IMR-90 (cell line): ENCODE measurements at regions of chr4 and their contacts with region 1.

Region 1: GRCh38 chr4:73308286-73308685 is 49.7 kb upstream of the ANKRD17 start:
- DNase-seq: peak; percentile 61
- ATAC-seq: peak; percentile 59
- H3K4me3 ChIP-seq: no peak overlapping the region
- H3K27ac ChIP-seq: peak overlapping the region; percentile 84
- H3K4me1 ChIP-seq: peaks cover 4% of the 10 kb centered on the region
- H3K27me3 ChIP-seq: no peaks in the 10 kb centered on the region
- CTCF ChIP-seq: peak; percentile 64
- POLR2A ChIP-seq: no peak
- RAD21 ChIP-seq: peak; percentile 75

Region 2: DNA sequence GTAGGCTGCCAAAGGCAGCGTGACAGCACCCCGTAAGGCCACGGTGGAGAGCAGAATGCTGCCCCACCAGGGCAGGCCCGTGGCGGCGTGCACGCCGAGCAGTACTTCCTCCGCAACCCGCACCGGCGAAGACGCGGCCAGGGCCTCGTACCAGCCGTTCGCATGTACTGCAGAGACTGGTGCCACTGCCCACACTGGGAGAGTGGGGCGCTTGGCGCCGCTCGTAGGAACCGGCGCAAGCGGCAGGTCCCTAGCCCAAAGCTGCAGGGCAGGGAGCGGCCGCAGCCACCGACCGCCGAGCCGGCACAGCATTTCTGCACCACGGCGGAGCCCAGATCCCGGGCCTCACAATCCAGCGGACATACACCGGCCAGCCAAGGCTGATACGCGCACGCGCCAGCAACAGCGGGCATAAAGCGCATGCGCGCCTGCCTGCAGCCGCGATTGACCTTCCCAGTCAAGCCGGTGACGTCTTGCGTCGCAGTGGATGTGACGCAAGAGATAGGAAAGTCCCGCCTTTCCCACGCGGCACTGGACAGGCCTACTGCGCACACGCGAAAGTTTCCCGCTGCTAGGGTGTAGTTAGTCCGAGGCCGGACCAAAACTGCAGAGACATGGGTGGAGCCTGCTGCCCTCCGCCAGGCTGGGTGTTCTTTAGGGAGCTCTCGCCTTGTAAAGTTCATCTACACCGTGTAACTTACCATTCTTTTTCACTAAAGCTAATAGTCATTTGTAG is 238.8 kb before region 1 on chr4 and contains the start of gene COX18:
- CTCF ChIA-PET with region 1: no interaction called
- POLR2A ChIA-PET with region 1: no interaction called
- dilution Hi-C with region 1: no loop called
- in situ Hi-C with region 1: no loop called
- intact Hi-C with region 1: loop called (anchors 5 kb)
- DNase-seq: peak; percentile 99
- ATAC-seq: peak; percentile 91
- H3K4me3 ChIP-seq: peak within 1 kb of the TSS; percentile 66
- H3K27ac ChIP-seq: peak within 1 kb of the TSS; percentile 82
- H3K4me1 ChIP-seq: no peaks in the 10 kb centered on the region; the same call in 1 of the 2 replicates
- H3K27me3 ChIP-seq: no peaks in the 10 kb centered on the region
- CTCF ChIP-seq: no peak
- POLR2A ChIP-seq: peak; percentile 65
- RAD21 ChIP-seq: no peak
- total RNA-seq, gene COX18: 20.6 and 22.0 TPM in 2 replicates

Region 3: DNA sequence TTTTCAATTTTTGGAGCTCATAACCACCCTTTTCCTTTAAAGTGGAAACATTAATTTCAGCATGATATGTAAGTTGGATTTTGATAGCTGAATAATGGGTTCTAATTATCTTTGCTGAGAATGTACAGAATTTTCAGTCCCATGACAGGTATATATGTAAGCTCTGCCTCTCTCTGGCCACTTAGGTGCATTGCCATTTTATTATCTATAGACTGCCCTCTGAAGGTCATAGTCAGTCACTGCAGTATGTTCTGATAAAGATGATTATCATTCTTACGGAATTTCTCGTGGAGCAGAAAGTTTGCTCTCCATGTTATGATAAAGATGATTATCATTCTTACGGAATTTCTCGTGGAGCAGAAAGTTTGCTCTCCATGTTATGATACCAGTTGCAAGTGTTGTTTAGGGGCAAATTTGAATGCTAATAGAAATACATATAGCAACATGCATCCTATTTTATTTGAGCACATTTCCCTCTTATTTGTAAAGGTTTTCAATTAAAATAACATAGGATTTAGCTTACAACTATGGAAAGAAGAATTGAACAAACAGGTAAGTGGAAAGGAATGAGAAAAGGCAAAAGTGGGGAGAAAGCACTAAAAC is 138.2 kb after region 1 on chr4:
- CTCF ChIA-PET with region 1: interaction called, 5 read pairs
- POLR2A ChIA-PET with region 1: no interaction called
- dilution Hi-C with region 1: no loop called
- in situ Hi-C with region 1: no loop called
- intact Hi-C with region 1: loop called (anchors 2 kb)
- DNase-seq: peak; percentile 63
- ATAC-seq: peak; percentile 84
- H3K4me3 ChIP-seq: no peak overlapping the region
- H3K27ac ChIP-seq: no peak overlapping the region
- H3K4me1 ChIP-seq: peaks cover 3% of the 10 kb centered on the region
- H3K27me3 ChIP-seq: peaks cover 2% of the 10 kb centered on the region; the same call in 1 of the 2 replicates
- CTCF ChIP-seq: peak; percentile 92
- POLR2A ChIP-seq: no peak
- RAD21 ChIP-seq: peak; percentile 58

Region 4: GRCh38 chr4:73573794-73574406 is 265.6 kb after region 1 on chr4:
- CTCF ChIA-PET with region 1: no interaction called
- POLR2A ChIA-PET with region 1: no interaction called
- dilution Hi-C with region 1: no loop called
- in situ Hi-C with region 1: no loop called
- intact Hi-C with region 1: loop called (anchors 5 kb)
- DNase-seq: peak; percentile 82
- ATAC-seq: peak; percentile 98
- H3K4me3 ChIP-seq: no peak overlapping the region
- H3K27ac ChIP-seq: no peak overlapping the region
- H3K4me1 ChIP-seq: no peaks in the 10 kb centered on the region
- H3K27me3 ChIP-seq: peaks cover 2% of the 10 kb centered on the region; the same call in 1 of the 2 replicates
- CTCF ChIP-seq: peak; percentile 88
- POLR2A ChIP-seq: no peak
- RAD21 ChIP-seq: peak; percentile 80

Region 5: GRCh38 chr4:73653695-73654106 is 345.4 kb after region 1 on chr4:
- CTCF ChIA-PET with region 1: no interaction called
- POLR2A ChIA-PET with region 1: no interaction called
- dilution Hi-C with region 1: no loop called
- in situ Hi-C with region 1: loop called (anchors 5 kb)
- intact Hi-C with region 1: loop called (anchors 2 kb)
- DNase-seq: peak; percentile 62
- ATAC-seq: peak; percentile 69
- H3K4me3 ChIP-seq: no peak overlapping the region
- H3K27ac ChIP-seq: no peak overlapping the region
- H3K4me1 ChIP-seq: no peaks in the 10 kb centered on the region
- H3K27me3 ChIP-seq: peaks cover 3% of the 10 kb centered on the region; the same call in 1 of the 2 replicates
- CTCF ChIP-seq: peak; percentile 76
- POLR2A ChIP-seq: no peak
- RAD21 ChIP-seq: peak; percentile 90

Region 6: DNA sequence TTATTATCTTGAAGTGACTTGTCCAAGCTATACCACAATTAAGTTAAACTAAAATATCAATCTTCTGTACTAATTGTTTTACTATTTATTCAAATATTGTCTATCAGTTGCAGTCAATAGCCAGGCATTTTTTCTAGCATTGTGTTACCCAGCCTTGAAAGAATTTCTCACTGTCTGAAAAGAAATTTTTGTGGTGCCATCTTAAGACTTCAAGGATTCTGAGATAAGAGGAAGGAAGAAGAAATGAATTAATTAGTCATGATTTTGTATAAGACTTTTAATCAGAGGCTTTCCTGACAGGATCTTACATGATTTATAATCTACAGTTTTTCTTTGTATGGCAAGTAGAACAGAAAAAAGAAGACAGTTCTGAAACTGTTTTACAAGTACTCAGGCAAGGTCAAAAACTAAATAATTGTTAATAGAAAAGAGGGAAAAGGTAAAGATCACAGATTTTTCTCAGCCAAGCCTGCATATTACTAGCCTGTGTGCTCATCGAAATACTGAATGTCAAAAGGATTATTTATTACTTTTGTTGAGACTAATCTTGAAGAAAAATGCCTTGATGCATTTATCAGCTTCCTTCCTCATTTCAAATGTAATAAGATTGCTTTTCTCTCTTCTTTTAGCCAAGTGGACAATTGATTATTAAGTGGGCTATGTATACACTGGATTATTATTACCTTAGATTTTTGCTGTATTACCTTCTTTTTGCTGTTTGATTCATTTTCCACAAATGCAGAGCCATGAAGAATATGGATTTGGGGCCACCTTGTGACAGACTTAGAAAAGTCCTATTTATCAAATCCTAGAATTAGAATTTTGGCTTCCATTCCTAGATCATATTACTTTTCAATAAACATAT is 614.7 kb after region 1 on chr4:
- CTCF ChIA-PET with region 1: no interaction called
- POLR2A ChIA-PET with region 1: no interaction called
- dilution Hi-C with region 1: no loop called
- in situ Hi-C with region 1: no loop called
- intact Hi-C with region 1: loop called (anchors 10 kb)
- DNase-seq: peak; percentile 59
- ATAC-seq: no peak; the same call in 1 of the 2 replicates
- H3K4me3 ChIP-seq: no peak overlapping the region
- H3K27ac ChIP-seq: no peak overlapping the region
- H3K4me1 ChIP-seq: peaks cover 6% of the 10 kb centered on the region
- H3K27me3 ChIP-seq: peaks cover 8% of the 10 kb centered on the region
- CTCF ChIP-seq: peak; percentile 61
- POLR2A ChIP-seq: no peak
- RAD21 ChIP-seq: peak; percentile 76

Region 7: GRCh38 chr4:74109116-74109869 is 801.0 kb after region 1 on chr4:
- CTCF ChIA-PET with region 1: no interaction called
- POLR2A ChIA-PET with region 1: no interaction called
- dilution Hi-C with region 1: no loop called
- in situ Hi-C with region 1: loop called (anchors 25 kb)
- intact Hi-C with region 1: no loop called
- DNase-seq: peak; percentile 97
- ATAC-seq: peak; percentile 87
- H3K4me3 ChIP-seq: no peak overlapping the region
- H3K27ac ChIP-seq: peak overlapping the region; percentile 68
- H3K4me1 ChIP-seq: peaks cover 10% of the 10 kb centered on the region
- H3K27me3 ChIP-seq: no peaks in the 10 kb centered on the region
- CTCF ChIP-seq: no peak
- POLR2A ChIP-seq: 0 out of 2 replicates have a peak, but pooled peaks have one; percentile 7
- RAD21 ChIP-seq: no peak